ENCODE measurements at regions of chrX and their contacts with region 1.

Region 1: GRCh38 chrX:24081661-24082264 is 27.0 kb downstream of the EIF2S3 start:
- DNase-seq: peak; percentile 36
- H3K4me3 Mint-ChIP-seq: no peak overlapping the region
- H3K27ac Mint-ChIP-seq: peak overlapping the region; percentile 22
- H3K4me1 Mint-ChIP-seq: peaks cover 12% of the 10 kb centered on the region
- H3K27me3 Mint-ChIP-seq: no peaks in the 10 kb centered on the region

Region 2: GRCh38 chrX:23953908-23954269 is 127.9 kb before region 1 on chrX:
- intact Hi-C with region 1: no loop called
- DNase-seq: no peak
- H3K4me3 Mint-ChIP-seq: peak overlapping the region; percentile 83
- H3K27ac Mint-ChIP-seq: peak overlapping the region; percentile 95
- H3K4me1 Mint-ChIP-seq: peaks cover 26% of the 10 kb centered on the region
- H3K27me3 Mint-ChIP-seq: no peaks in the 10 kb centered on the region

Region 3: DNA sequence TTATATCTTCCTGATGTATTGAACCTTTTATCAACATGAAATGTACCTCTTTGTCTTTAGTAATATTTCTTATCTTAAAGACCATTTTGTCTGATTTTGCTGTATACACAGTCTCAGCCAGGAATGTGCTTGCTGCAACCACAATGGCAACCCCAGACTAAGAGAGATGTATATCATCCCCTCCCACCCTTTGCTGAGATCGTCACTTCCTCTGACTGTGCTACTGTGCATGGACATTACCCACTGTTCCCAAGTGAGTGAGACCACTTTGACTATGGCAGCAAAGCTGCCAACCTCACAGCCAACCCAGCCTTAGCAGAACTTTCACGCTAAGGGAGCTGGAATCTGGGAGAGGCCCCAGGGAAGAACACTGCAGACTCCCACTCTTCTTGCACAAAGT is 18.9 kb after region 1 on chrX:
- intact Hi-C with region 1: loop called (anchors 2 kb)
- DNase-seq: no peak
- H3K4me3 Mint-ChIP-seq: no peak overlapping the region
- H3K27ac Mint-ChIP-seq: peak overlapping the region; percentile 78
- H3K4me1 Mint-ChIP-seq: peaks cover 21% of the 10 kb centered on the region
- H3K27me3 Mint-ChIP-seq: no peaks in the 10 kb centered on the region

Region 4: DNA sequence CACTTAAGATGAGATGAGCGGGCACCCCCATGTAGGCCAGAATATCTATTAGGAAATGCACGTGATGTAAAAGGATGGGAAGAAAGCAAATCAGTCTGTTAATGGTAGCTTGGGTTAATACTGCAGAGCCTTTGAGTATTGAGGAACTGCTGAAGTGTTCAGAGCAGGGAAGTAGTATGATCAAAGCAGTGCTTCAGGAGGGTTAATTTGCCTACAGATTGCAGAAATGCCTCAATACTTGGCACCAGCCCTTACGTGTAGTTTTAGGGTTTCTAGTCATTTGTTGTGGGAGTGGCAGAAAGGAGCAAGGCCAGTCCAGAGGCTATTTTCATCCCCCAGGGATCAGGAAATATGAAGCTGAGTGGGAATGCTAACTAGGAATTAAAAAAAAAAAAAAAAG is 87.4 kb after region 1 on chrX:
- intact Hi-C with region 1: loop called (anchors 2 kb)
- DNase-seq: no peak
- H3K4me3 Mint-ChIP-seq: peak overlapping the region; percentile 38
- H3K27ac Mint-ChIP-seq: peak overlapping the region; percentile 76
- H3K4me1 Mint-ChIP-seq: peaks cover 38% of the 10 kb centered on the region
- H3K27me3 Mint-ChIP-seq: no peaks in the 10 kb centered on the region

Region 5: DNA sequence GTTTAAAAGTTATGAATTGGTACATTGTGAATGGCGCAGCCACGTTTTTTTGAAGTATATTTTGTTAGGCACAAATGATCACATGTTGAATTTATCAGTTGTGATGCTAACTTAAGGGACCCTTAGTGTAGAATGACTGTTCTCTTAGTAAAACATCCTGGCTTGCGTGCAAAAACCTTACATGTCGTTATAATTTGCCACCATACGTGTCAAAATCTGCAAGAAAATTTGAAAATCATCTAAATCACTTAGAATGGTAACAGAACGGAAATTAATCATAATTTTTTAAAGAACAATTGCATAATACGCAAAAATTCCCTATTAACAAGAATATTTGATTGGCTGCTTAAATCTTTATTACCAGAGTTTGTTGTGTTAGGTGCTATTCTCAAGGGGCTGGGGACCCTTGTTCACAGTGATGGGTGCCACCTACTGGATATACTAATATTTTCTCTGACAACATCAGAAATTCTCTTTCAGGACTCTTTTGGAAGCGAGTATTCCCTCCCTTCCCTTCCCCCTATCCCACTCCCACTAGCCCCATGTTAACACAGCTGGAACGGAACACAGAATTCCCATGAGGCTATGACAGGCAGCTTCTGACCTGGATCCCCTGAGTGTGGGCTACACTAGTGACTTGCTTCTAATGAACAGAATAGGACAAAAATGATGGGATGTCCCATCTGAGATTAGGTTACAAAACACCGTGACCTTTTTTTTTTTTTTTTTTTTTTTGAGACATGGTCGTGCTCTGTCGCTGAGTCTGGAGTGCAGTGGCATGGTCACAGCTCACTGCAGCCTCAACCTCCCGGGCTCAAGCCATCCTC is 160.3 kb after region 1 on chrX:
- intact Hi-C with region 1: loop called (anchors 2 kb)
- DNase-seq: no peak
- H3K4me3 Mint-ChIP-seq: no peak overlapping the region
- H3K27ac Mint-ChIP-seq: no peak overlapping the region
- H3K4me1 Mint-ChIP-seq: peaks cover 5% of the 10 kb centered on the region
- H3K27me3 Mint-ChIP-seq: peaks cover 2% of the 10 kb centered on the region

Measured in activated T-helper 2 cell treated with anti-CD3 and anti-CD28 coated beads, Interferon-gamma antibody, Interleukin-2, Interleukin-4, amounts not matched to agents 10 μg/mL and 5 μg/mL and 100 μg/mL, durations not matched to agents 14 hours and 24 hours and 36 hours (primary cell).